Panc1 (cell line): ENCODE measurements at regions of chr5 and their contacts with region 1.

Region 1: GRCh38 chr5:80466669-80467485 is 21.0 kb upstream of the FAM151B start:
- DNase-seq: no peak
- ATAC-seq: no peak
- H3K4me3 ChIP-seq: no peak overlapping the region
- H3K27ac ChIP-seq: no peak overlapping the region
- H3K4me1 ChIP-seq: no peaks in the 10 kb centered on the region
- H3K27me3 ChIP-seq: no peaks in the 10 kb centered on the region
- CTCF ChIP-seq: no peak

Region 2: GRCh38 chr5:80487829-80488721 is 21.2 kb after region 1 on chr5 and contains the start of gene FAM151B:
- CTCF ChIA-PET with region 1: interaction called, 4 read pairs
- POLR2A ChIA-PET with region 1: interaction called, 10 read pairs
- in situ Hi-C with region 1: no loop called
- intact Hi-C with region 1: no loop called
- DNase-seq: peak; percentile 87
- ATAC-seq: peak; percentile 97
- H3K4me3 ChIP-seq: peak within 1 kb of the TSS; percentile 64 to 86
- H3K27ac ChIP-seq: peak within 1 kb of the TSS; percentile 94
- H3K4me1 ChIP-seq: peaks cover 13% of the 10 kb centered on the region
- H3K27me3 ChIP-seq: no peaks in the 10 kb centered on the region
- CTCF ChIP-seq: peak; percentile 64
- total RNA-seq, gene FAM151B: 2.8 TPM

Region 3: DNA sequence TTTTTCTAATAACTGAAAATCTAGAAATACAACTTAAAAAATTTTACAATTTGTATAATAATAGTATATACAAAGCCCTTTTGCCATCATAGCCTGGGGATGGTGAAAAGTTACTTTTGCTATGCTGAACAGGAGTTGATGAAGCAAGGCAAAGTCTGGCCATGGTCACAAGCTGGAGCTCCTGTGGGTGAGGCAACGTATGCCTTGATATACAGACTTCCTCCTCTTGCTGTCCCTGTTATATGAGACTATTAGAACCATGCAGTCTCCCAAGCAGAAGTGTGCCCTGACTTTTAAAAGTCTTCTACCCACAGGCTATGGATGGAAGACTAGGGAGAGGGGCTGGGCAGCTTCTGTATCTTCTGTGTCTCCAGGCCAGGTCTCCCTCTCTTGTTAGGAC is 36.8 kb after region 1 on chr5:
- CTCF ChIA-PET with region 1: no interaction called
- POLR2A ChIA-PET with region 1: interaction called, 19 read pairs
- in situ Hi-C with region 1: no loop called
- intact Hi-C with region 1: no loop called
- DNase-seq: no peak
- ATAC-seq: no peak
- H3K4me3 ChIP-seq: no peak overlapping the region
- H3K27ac ChIP-seq: no peak overlapping the region
- H3K4me1 ChIP-seq: no peaks in the 10 kb centered on the region
- H3K27me3 ChIP-seq: no peaks in the 10 kb centered on the region
- CTCF ChIP-seq: no peak